Activated naive CD4-positive, alpha-beta T cell treated with anti-CD3 and anti-CD28 coated beads for 36 hours (primary cell): ENCODE measurements at regions of chr17 and their contacts with region 1.

Region 1: GRCh38 chr17:44878627-44879221 is 20.5 kb downstream of the EFTUD2 start:
- DNase-seq: peak; percentile 50
- H3K4me3 Mint-ChIP-seq: no peak overlapping the region
- H3K27ac Mint-ChIP-seq: no peak overlapping the region
- H3K4me1 Mint-ChIP-seq: no peaks in the 10 kb centered on the region
- H3K27me3 Mint-ChIP-seq: no peaks in the 10 kb centered on the region

Region 2: GRCh38 chr17:44864866-44865660 is 13.7 kb before region 1 on chr17:
- CTCF ChIA-PET with region 1: interaction called, 11 read pairs
- intact Hi-C with region 1: no loop called
- DNase-seq: peak; percentile 78
- H3K4me3 Mint-ChIP-seq: no peak overlapping the region
- H3K27ac Mint-ChIP-seq: no peak overlapping the region
- H3K4me1 Mint-ChIP-seq: no peaks in the 10 kb centered on the region
- H3K27me3 Mint-ChIP-seq: no peaks in the 10 kb centered on the region